ENCODE measurements at regions of chr6 and their contacts with region 1.

Region 1: DNA sequence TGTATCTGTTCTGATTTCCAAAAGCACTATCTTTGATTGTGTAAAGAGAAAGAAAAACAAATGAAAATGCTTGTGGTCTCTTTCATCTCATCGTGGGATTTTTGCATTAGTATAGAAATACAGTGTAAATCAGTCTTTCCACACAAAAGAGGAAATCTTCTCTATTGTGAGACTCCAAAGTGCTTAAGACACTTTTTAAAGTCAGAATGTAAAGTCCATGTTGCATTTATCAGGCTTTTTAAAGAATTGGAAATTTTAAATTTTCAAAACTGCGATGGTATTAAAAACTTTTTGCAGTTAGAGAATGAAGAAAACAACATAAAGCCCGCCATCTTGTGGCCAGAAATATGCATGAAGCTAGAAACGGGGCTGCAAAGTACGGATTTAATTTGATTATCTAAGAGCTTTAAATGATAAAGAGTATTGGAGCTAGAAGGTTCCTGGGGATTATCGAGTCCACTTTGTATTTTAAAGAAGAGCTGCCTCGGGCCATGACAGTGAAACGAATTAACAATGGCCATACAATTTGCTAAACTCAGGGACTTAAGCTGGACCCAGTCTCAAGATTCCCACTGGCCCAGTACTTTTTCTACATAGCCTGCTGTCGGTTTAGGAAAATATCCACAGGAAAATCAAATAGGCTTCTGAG is 339.6 kb downstream of the ARHGAP18 start:
- DNase-seq: peak; percentile 39 to 51 (median 44)
- H3K4me3 ChIP-seq: no peak overlapping the region
- H3K4me3 Mint-ChIP-seq: peak overlapping the region in 6 of 8 donors; percentile 40 to 66 (median 48)
- H3K27ac ChIP-seq: no peak overlapping the region
- H3K27ac Mint-ChIP-seq: no peak overlapping the region
- H3K4me1 ChIP-seq: peaks cover 9% of the 10 kb centered on the region
- H3K4me1 Mint-ChIP-seq: peaks cover 5 to 17% (median 11%) of the 10 kb centered on the region in 4 donors
- H3K27me3 ChIP-seq: no peaks in the 10 kb centered on the region
- H3K27me3 Mint-ChIP-seq: no peaks in the 10 kb centered on the region

Region 2: DNA sequence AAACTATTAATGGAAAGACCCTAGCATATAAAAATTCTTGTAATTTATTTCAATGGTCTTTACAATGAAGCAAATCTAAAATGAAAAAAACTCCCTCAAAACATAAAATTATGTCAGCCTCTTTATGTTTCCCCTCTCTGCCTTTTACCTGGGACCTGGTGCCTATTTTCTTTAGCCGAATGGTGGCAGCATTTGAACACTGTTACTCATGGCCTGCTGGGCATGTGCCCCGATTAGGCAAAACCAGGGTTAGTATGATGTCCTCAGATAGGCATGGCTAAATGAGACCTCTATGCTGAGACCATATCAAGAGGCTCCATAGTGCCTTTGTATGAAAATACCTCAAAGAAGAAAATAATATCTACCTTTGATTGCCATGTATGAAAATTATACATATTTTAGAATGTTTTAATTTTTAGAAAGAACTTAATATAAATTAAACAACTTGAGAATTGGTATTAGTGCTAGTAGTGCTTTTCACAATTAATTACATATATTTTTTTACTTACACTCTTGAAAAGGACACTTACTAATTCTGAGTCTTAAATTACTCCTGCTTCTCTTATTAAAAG is 1815.9 kb before region 1 on chr6:
- CTCF ChIA-PET with region 1: no interaction called
- POLR2A ChIA-PET with region 1: no interaction called
- intact Hi-C with region 1: loop called (anchors 10 kb)
- DNase-seq: peak in 2 of 5 donors; percentile 2 to 10
- H3K4me3 ChIP-seq: no peak overlapping the region
- H3K4me3 Mint-ChIP-seq: no peak overlapping the region
- H3K27ac ChIP-seq: no peak overlapping the region
- H3K27ac Mint-ChIP-seq: no peak overlapping the region
- H3K4me1 ChIP-seq: no peaks in the 10 kb centered on the region
- H3K4me1 Mint-ChIP-seq: no peaks in the 10 kb centered on the region
- H3K27me3 ChIP-seq: no peaks in the 10 kb centered on the region
- H3K27me3 Mint-ChIP-seq: peaks cover 2 to 6% of the 10 kb centered on the region in 2 donors

Region 3: GRCh38 chr6:128725271-128726233 is 644.8 kb before region 1 on chr6:
- CTCF ChIA-PET with region 1: interaction called, 19 read pairs
- POLR2A ChIA-PET with region 1: no interaction called
- intact Hi-C with region 1: loop called (anchors 1 kb)
- DNase-seq: peak in 4 of 5 donors; percentile 8 to 19 (median 12)
- H3K4me3 ChIP-seq: no peak overlapping the region
- H3K4me3 Mint-ChIP-seq: no peak overlapping the region
- H3K27ac ChIP-seq: no peak overlapping the region
- H3K27ac Mint-ChIP-seq: no peak overlapping the region
- H3K4me1 ChIP-seq: no peaks in the 10 kb centered on the region
- H3K4me1 Mint-ChIP-seq: no peaks in the 10 kb centered on the region
- H3K27me3 ChIP-seq: no peaks in the 10 kb centered on the region
- H3K27me3 Mint-ChIP-seq: peaks cover 13 to 14% of the 10 kb centered on the region in 2 donors

Region 4: GRCh38 chr6:128807577-128807976 is 562.8 kb before region 1 on chr6:
- CTCF ChIA-PET with region 1: interaction called, 8 read pairs
- POLR2A ChIA-PET with region 1: no interaction called
- intact Hi-C with region 1: loop called (anchors 2 kb)
- DNase-seq: peak in 2 of 5 donors; percentile 2 to 9
- H3K4me3 ChIP-seq: no peak overlapping the region
- H3K4me3 Mint-ChIP-seq: no peak overlapping the region
- H3K27ac ChIP-seq: no peak overlapping the region
- H3K27ac Mint-ChIP-seq: no peak overlapping the region
- H3K4me1 ChIP-seq: no peaks in the 10 kb centered on the region
- H3K4me1 Mint-ChIP-seq: no peaks in the 10 kb centered on the region
- H3K27me3 ChIP-seq: no peaks in the 10 kb centered on the region
- H3K27me3 Mint-ChIP-seq: peaks cover 0 to under 1% of the 10 kb centered on the region in 2 donors

Region 5: GRCh38 chr6:129381885-129382284 is 11.5 kb after region 1 on chr6:
- CTCF ChIA-PET with region 1: interaction called, 10 read pairs
- POLR2A ChIA-PET with region 1: no interaction called
- intact Hi-C with region 1: no loop called
- DNase-seq: no peak
- H3K4me3 ChIP-seq: no peak overlapping the region
- H3K4me3 Mint-ChIP-seq: no peak overlapping the region
- H3K27ac ChIP-seq: no peak overlapping the region
- H3K27ac Mint-ChIP-seq: no peak overlapping the region
- H3K4me1 ChIP-seq: no peaks in the 10 kb centered on the region
- H3K4me1 Mint-ChIP-seq: no peaks in the 10 kb centered on the region
- H3K27me3 ChIP-seq: no peaks in the 10 kb centered on the region
- H3K27me3 Mint-ChIP-seq: peaks cover 0 to 1% of the 10 kb centered on the region in 2 donors

Region 6: GRCh38 chr6:129575378-129576118 is 205.2 kb after region 1 on chr6:
- CTCF ChIA-PET with region 1: interaction called, 3 read pairs
- POLR2A ChIA-PET with region 1: no interaction called
- intact Hi-C with region 1: loop called (anchors 10 kb)
- DNase-seq: peak in 4 of 5 donors; percentile 14 to 30 (median 18)
- H3K4me3 ChIP-seq: no peak overlapping the region
- H3K4me3 Mint-ChIP-seq: peak overlapping the region; percentile 15 to 64 (median 50)
- H3K27ac ChIP-seq: no peak overlapping the region
- H3K27ac Mint-ChIP-seq: peak overlapping the region in 1 of 7 donors; percentile 57
- H3K4me1 ChIP-seq: no peaks in the 10 kb centered on the region
- H3K4me1 Mint-ChIP-seq: peaks cover 3 to 8% (median 7%) of the 10 kb centered on the region in 4 donors
- H3K27me3 ChIP-seq: no peaks in the 10 kb centered on the region
- H3K27me3 Mint-ChIP-seq: no peaks in the 10 kb centered on the region